Activated CD4-positive, alpha-beta T cell treated with anti-CD3 and anti-CD28 coated beads, Interleukin-2, amount 10 ng/mL, durations not matched to agents 24 days and 14 days (primary cell): ENCODE measurements at regions of chrX and their contacts with region 1.

Region 1: DNA sequence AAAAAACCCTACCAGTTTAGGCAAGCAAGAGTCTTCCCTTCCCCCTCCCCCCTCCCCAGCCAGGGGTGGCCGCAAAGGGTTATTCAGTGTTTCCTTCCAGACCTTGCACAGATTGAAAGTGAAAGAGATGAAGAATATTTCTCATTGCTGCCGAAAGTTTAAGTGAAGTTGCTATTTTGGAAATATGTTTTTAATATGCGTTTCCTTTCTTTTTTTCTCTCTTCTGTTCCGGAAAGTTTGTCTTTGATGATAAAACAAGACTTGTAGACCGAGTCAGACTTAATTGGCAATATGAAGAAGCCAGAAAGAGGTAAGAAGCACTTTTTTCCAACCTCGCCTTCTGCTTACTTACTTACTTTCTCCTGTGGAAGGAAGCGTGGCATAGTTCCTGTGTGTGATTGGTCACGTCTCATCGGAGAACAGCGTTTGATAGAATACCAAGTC is 58.5 kb upstream of the CLCN4 start:
- DNase-seq: peak; percentile 89
- H3K4me3 Mint-ChIP-seq: peak overlapping the region; percentile 88
- H3K27ac Mint-ChIP-seq: peak overlapping the region; percentile 93
- H3K4me1 Mint-ChIP-seq: peaks cover 38% of the 10 kb centered on the region
- H3K27me3 Mint-ChIP-seq: no peaks in the 10 kb centered on the region

Region 2: GRCh38 chrX:9464435-9465371 is 633.6 kb before region 1 on chrX and contains the start of gene TBL1X:
- intact Hi-C with region 1: loop called (anchors 5 kb)
- DNase-seq: peak; percentile 87
- H3K4me3 Mint-ChIP-seq: peak within 1 kb of the TSS; percentile 73
- H3K27ac Mint-ChIP-seq: peak within 1 kb of the TSS; percentile 84
- H3K4me1 Mint-ChIP-seq: peaks cover 33% of the 10 kb centered on the region
- H3K27me3 Mint-ChIP-seq: peaks cover 5% of the 10 kb centered on the region
- total RNA-seq, gene TBL1X: 20.0 and 25.5 TPM in 2 replicates

Region 3: GRCh38 chrX:10007621-10008020 is 90.7 kb before region 1 on chrX:
- intact Hi-C with region 1: loop called (anchors 1 kb)
- DNase-seq: no peak
- H3K4me3 Mint-ChIP-seq: no peak overlapping the region
- H3K27ac Mint-ChIP-seq: no peak overlapping the region
- H3K4me1 Mint-ChIP-seq: peaks cover 44% of the 10 kb centered on the region
- H3K27me3 Mint-ChIP-seq: no peaks in the 10 kb centered on the region

Region 4: DNA sequence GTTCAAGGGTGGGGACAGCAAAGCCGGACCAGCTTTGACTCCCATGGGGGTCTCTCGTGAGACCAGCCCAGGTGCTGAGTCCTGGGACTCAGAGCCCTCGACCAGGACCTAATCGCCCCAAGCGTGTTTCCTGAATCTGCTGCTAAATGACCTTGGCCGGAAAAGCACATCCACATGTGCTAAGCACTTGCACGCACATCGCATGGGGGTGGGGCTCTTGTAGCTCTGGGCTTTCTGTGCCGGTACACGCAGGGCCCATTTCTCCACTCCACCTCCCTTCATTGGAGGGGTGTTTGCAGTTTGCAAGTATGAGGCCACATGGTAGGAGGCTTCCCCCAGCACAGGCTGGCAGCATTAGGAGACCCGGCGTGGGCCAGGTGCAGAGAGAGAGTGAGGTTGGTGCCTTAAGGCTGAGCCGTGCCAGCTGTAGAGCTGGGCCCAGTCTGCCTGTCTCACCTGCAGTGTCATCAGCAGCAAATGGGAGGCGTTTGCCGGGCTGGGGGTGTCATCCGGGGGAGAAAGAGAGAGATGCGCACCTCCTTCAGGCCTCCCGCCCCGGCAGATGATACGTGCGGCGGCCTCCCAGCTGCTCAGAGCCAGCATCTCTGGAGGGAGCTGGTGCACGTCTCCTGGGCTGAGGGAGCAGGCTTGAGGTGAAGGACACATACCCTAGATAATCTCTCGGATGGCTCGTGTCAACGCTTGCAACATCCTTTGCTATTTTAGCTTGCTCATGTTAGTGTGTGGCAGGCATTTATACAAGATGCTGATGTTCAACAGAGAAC is 13.3 kb after region 1 on chrX:
- intact Hi-C with region 1: loop called (anchors 1 kb)
- DNase-seq: peak; percentile 78
- H3K4me3 Mint-ChIP-seq: peak overlapping the region; percentile 87
- H3K27ac Mint-ChIP-seq: peak overlapping the region; percentile 99
- H3K4me1 Mint-ChIP-seq: peaks cover 41% of the 10 kb centered on the region
- H3K27me3 Mint-ChIP-seq: no peaks in the 10 kb centered on the region

Region 5: DNA sequence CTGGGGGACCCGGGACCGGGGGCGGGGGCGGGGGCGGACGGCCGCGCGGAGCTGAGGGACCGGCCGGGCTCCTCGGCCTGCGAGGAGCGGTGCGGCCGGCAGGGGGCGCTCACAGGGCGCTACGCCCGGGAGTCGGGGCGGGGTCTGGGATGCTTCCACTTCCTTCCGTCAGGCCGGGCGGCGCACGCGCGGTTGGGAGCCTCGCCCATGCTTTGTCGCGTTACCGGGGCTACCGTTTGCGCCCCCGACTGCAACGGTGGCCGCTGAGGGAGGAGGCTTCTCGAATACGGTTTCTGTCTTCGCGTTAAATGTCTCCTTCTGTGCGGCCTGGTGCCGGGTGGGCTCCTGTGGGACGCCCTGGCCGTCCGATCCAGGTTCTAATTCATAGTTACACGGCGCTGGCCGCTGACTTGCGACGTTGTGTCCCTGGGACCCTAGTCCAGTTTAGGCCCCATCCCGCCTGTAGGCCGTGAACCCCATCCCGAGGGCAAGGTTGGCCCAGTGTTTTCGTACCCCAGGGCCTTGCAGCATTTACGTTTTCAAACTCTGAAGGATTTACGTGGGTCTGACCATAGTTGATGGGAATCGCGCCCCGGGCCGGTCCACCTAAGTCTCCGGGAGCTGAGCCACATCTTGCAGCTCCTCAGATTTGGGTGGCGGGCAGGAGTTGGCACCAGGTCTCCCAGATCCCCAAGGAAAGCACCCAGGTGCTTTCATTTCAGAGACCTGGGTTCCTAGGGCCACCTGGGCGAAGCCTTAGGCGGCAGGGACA is 1660.3 kb after region 1 on chrX:
- intact Hi-C with region 1: loop called (anchors 10 kb)
- DNase-seq: peak; percentile 96
- H3K4me3 Mint-ChIP-seq: peak overlapping the region; percentile 95
- H3K27ac Mint-ChIP-seq: peak overlapping the region; percentile 99
- H3K4me1 Mint-ChIP-seq: peaks cover 22% of the 10 kb centered on the region
- H3K27me3 Mint-ChIP-seq: peaks cover 25% of the 10 kb centered on the region